Activated CD4-positive, alpha-beta T cell treated with anti-CD3 and anti-CD28 coated beads for 36 hours (primary cell): ENCODE measurements at regions of chr12 and their contacts with region 1.

Region 1: GRCh38 chr12:69007101-69007854 is 74.3 kb upstream of the CPM start:
- DNase-seq: peak; percentile 39
- ATAC-seq: peak; percentile 85
- H3K4me3 Mint-ChIP-seq: no peak overlapping the region
- H3K27ac Mint-ChIP-seq: peak overlapping the region; percentile 61
- H3K4me1 Mint-ChIP-seq: peaks cover 11% of the 10 kb centered on the region
- H3K27me3 Mint-ChIP-seq: peaks cover 29% of the 10 kb centered on the region

Region 2: GRCh38 chr12:68915055-68915454 is 92.2 kb before region 1 on chr12:
- CTCF ChIA-PET with region 1: no interaction called
- POLR2A ChIA-PET with region 1: no interaction called
- intact Hi-C with region 1: loop called in 1 of 2 experiments (anchors 5 kb)
- DNase-seq: no peak
- ATAC-seq: no peak
- H3K4me3 Mint-ChIP-seq: no peak overlapping the region
- H3K27ac Mint-ChIP-seq: no peak overlapping the region
- H3K4me1 Mint-ChIP-seq: peaks cover 7% of the 10 kb centered on the region
- H3K27me3 Mint-ChIP-seq: no peaks in the 10 kb centered on the region